ENCODE measurements at regions of chr2 and their contacts with region 1.

Region 1: GRCh38 chr2:222707689-222708525 is 36.4 kb downstream of the MOGAT1 start:
- DNase-seq: peak; percentile 84
- H3K4me3 Mint-ChIP-seq: no peak overlapping the region
- H3K27ac Mint-ChIP-seq: no peak overlapping the region
- H3K4me1 Mint-ChIP-seq: peaks cover 12% of the 10 kb centered on the region
- H3K27me3 Mint-ChIP-seq: peaks cover 44% of the 10 kb centered on the region

Region 2: DNA sequence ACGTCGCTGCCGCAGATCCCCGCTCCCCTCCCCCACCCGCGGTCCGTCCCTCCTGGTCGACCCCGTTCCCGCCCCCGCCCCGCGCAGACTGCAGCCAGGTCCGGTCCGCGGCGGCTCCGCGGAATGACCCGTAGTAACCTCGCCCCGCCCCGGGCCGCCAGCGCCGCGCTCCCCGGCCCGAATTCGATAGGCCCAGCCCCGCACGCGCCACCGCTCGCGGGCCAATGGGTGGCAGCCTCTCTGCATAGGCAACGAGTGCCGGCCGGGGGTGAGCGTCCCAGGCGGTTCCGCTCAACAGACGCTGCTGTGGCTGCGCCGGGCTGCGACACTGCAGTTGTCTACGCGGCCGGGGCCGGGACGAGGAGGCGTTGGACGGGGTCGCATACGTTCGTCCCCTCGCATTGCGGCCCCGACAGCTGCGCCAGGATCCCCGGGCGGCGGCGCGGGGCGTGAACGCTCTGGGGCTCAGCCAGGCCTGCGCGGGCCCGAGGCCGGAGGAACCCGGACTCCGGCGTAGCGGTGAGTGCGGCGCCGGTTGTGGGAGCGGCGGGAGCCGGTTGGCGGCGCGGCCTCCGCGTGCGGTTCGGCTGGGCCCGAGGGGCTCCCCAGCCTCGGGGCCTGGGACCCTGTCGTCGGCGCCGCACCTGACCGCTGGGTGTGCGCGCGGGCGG is 153.0 kb after region 1 on chr2 and contains the start of gene ACSL3:
- CTCF ChIA-PET with region 1: interaction called, 16 read pairs
- DNase-seq: peak; percentile 96
- H3K4me3 Mint-ChIP-seq: peak within 1 kb of the TSS; percentile 76
- H3K27ac Mint-ChIP-seq: peak within 1 kb of the TSS; percentile 91
- H3K4me1 Mint-ChIP-seq: peaks cover 12% of the 10 kb centered on the region
- H3K27me3 Mint-ChIP-seq: peaks cover 12% of the 10 kb centered on the region

Region 3: GRCh38 chr2:222903234-222904220 is 195.6 kb after region 1 on chr2:
- CTCF ChIA-PET with region 1: interaction called, 54 read pairs
- DNase-seq: peak; percentile 50
- H3K4me3 Mint-ChIP-seq: no peak overlapping the region
- H3K27ac Mint-ChIP-seq: no peak overlapping the region
- H3K4me1 Mint-ChIP-seq: peaks cover 10% of the 10 kb centered on the region
- H3K27me3 Mint-ChIP-seq: no peaks in the 10 kb centered on the region

Region 4: GRCh38 chr2:222939208-222939856 is 231.4 kb after region 1 on chr2:
- CTCF ChIA-PET with region 1: interaction called, 53 read pairs
- DNase-seq: peak; percentile 80
- H3K4me3 Mint-ChIP-seq: no peak overlapping the region
- H3K27ac Mint-ChIP-seq: no peak overlapping the region
- H3K4me1 Mint-ChIP-seq: no peaks in the 10 kb centered on the region
- H3K27me3 Mint-ChIP-seq: no peaks in the 10 kb centered on the region